ENCODE measurements at regions of chr12 and their contacts with region 1.

Region 1: DNA sequence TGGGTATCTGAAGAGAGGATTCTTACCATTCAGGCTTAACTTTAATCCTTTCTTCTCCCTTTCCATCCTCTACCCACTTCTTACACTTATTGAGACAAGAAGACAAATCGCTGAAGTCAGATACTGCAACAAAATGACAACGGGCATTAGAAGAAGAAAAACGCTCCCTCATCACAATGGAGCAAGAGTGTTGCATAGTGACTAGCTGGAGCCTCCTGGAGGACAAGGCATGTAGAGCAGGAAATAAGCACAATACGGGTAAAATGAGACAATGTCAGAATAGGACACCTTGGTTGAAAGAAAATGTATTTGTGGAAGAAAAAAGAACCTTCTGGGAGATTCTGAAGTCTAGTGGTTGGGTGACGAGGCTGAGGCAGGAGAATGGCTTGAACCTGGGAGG is 501.0 kb downstream of the RERGL start:
- DNase-seq: no peak
- H3K4me3 ChIP-seq: no peak overlapping the region
- H3K27ac ChIP-seq: no peak overlapping the region
- H3K4me1 ChIP-seq: no peaks in the 10 kb centered on the region
- H3K27me3 ChIP-seq: no peaks in the 10 kb centered on the region
- CTCF ChIP-seq: no peak

Region 2: GRCh38 chr12:16385782-16386646 is 1203.0 kb before region 1 on chr12:
- intact Hi-C with region 1: loop called (anchors 5 kb)
- DNase-seq: peak; percentile 36
- H3K4me3 ChIP-seq: no peak overlapping the region
- H3K27ac ChIP-seq: no peak overlapping the region
- H3K4me1 ChIP-seq: no peaks in the 10 kb centered on the region
- H3K27me3 ChIP-seq: no peaks in the 10 kb centered on the region
- CTCF ChIP-seq: no peak

Region 3: GRCh38 chr12:17642340-17642650 is 53.3 kb after region 1 on chr12:
- intact Hi-C with region 1: no loop called
- DNase-seq: no peak
- H3K4me3 ChIP-seq: no peak overlapping the region
- H3K27ac ChIP-seq: no peak overlapping the region
- H3K4me1 ChIP-seq: no peaks in the 10 kb centered on the region
- H3K27me3 ChIP-seq: no peaks in the 10 kb centered on the region
- CTCF ChIP-seq: no peak

Measured in colonic mucosa (tissue), 4 donors.